ENCODE measurements at regions of chr5 and their contacts with region 1.

Region 1: GRCh38 chr5:80665057-80665456 is 10.3 kb upstream of the DHFR start:
- DNase-seq: no peak
- H3K4me3 ChIP-seq: no peak overlapping the region
- H3K27ac ChIP-seq: no peak overlapping the region
- H3K4me1 ChIP-seq: no peaks in the 10 kb centered on the region
- H3K27me3 ChIP-seq: no peaks in the 10 kb centered on the region
- CTCF ChIP-seq: no peak

Region 2: DNA sequence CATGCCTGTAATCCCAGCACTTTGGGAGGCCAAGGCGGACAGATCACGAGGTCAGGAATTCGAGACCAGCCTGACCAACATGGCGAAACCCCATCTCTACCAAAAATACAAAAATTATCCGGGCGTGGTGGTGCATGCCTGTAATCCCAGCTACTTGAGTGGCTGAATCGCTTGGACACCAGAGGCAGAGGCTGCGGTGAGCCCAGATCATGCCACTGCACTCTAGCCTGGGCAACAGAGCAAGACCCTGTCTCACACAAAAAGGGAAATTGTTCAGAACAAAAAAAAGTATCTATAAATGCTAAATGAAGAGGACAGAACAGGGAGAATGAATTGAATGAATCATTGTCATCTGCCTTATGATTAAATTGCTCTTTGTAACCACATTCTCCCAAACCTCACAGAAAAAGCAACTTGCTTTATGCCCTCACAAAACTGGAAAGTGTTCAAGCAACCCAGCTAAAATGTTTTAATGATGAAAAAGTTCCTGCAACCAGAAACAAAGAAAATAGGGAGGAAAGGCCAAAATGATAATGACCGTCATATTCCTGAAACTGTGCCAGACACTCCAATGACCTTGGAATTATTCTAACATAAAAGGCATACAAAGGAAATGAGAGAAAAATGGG is 492.9 kb before region 1 on chr5:
- CTCF ChIA-PET with region 1: no interaction called
- POLR2A ChIA-PET with region 1: interaction called, 17 read pairs
- intact Hi-C with region 1: no loop called
- DNase-seq: no peak
- H3K4me3 ChIP-seq: no peak overlapping the region
- H3K27ac ChIP-seq: no peak overlapping the region
- H3K4me1 ChIP-seq: no peaks in the 10 kb centered on the region
- H3K27me3 ChIP-seq: no peaks in the 10 kb centered on the region
- CTCF ChIP-seq: no peak

Measured in PC-9 (cell line).